ENCODE measurements at regions of chr9 and their contacts with region 1.

Region 1: DNA sequence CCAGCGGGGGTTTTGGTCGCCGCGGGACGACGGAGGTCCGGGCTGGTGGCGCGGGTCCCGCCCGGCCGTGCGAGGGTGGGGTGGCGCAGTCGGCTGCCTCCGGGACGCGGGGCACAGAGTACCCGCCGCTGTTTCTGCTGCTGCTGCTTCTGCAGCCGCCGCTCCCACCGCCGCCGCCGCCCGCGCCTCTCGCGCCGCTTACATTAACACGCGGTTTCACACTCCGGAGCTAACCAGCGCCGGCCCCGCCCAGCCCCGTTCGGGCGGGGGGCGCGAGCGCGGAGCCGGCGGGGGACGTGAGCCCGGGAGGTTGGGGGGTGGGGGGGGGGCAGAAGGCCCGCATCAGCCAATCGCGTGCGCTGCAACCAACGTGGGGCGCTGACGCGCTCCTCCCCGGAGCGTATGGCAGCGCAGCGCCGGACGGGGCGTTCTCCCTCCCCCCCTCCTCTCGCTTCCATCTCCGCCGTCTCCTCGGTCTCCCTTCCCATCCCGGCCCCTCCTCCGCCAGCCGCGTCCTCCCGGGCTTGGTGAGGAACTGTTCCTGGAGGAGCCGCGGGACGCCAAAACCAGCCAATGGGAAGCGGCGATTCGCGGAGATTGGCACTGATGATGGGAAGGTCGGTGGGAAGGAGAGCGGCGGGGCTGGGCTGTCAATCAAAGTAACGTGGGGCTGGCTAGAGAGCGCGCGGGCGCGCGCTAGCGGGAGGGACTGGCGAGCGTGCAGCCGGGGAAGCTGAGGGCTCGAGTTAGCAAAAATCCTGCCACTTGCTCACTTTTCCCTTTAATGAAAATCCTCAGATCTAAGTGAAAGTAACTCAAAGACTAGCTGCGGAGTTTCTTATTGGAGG is at the start of gene TLE1:
- DNase-seq: peak; percentile 97
- ATAC-seq: peak; percentile 79
- H3K4me3 ChIP-seq: peak within 1 kb of the TSS; percentile 76 to 92 (median 78)
- H3K4me3 Mint-ChIP-seq: peak within 1 kb of the TSS; percentile 98
- H3K27ac ChIP-seq: peak within 1 kb of the TSS; percentile 82 to 87
- H3K27ac Mint-ChIP-seq: peak within 1 kb of the TSS; percentile 95
- H3K4me1 ChIP-seq: peaks cover 32 to 35% of the 10 kb centered on the region in 2 donors
- H3K4me1 Mint-ChIP-seq: peaks cover 16% of the 10 kb centered on the region
- H3K27me3 ChIP-seq: peaks cover 0 to 21% (median 4%) of the 10 kb centered on the region in 4 experiments
- H3K27me3 Mint-ChIP-seq: peaks cover 12% of the 10 kb centered on the region
- CTCF ChIP-seq: no peak
- total RNA-seq, gene TLE1: 27.6 and 33.5 TPM in 2 replicates

Region 2: GRCh38 chr9:81521892-81522291 is 167.7 kb before region 1 on chr9:
- CTCF ChIA-PET with region 1: interaction called, 128 read pairs
- POLR2A ChIA-PET with region 1: no interaction called
- intact Hi-C with region 1: loop called (anchors 1 kb)
- DNase-seq: no peak
- ATAC-seq: no peak
- H3K4me3 ChIP-seq: no peak overlapping the region
- H3K4me3 Mint-ChIP-seq: no peak overlapping the region
- H3K27ac ChIP-seq: no peak overlapping the region
- H3K27ac Mint-ChIP-seq: no peak overlapping the region
- H3K4me1 ChIP-seq: peaks cover 0 to 7% of the 10 kb centered on the region in 2 donors
- H3K4me1 Mint-ChIP-seq: peaks cover 8% of the 10 kb centered on the region
- H3K27me3 ChIP-seq: peaks cover 0 to 5% (median 2%) of the 10 kb centered on the region in 4 experiments
- H3K27me3 Mint-ChIP-seq: peaks cover 20% of the 10 kb centered on the region
- CTCF ChIP-seq: no peak

Region 3: GRCh38 chr9:81592887-81593266 is 96.7 kb before region 1 on chr9:
- CTCF ChIA-PET with region 1: interaction called, 7 read pairs
- POLR2A ChIA-PET with region 1: no interaction called
- intact Hi-C with region 1: loop called (anchors 2 kb)
- DNase-seq: peak; percentile 24
- ATAC-seq: peak; percentile 21
- H3K4me3 ChIP-seq: no peak overlapping the region
- H3K4me3 Mint-ChIP-seq: peak overlapping the region; percentile 5
- H3K27ac ChIP-seq: no peak overlapping the region
- H3K27ac Mint-ChIP-seq: peak overlapping the region; percentile 11
- H3K4me1 ChIP-seq: peaks cover 42 to 44% of the 10 kb centered on the region in 2 donors
- H3K4me1 Mint-ChIP-seq: peaks cover 49% of the 10 kb centered on the region
- H3K27me3 ChIP-seq: no peaks in the 10 kb centered on the region
- H3K27me3 Mint-ChIP-seq: no peaks in the 10 kb centered on the region
- CTCF ChIP-seq: no peak

Region 4: DNA sequence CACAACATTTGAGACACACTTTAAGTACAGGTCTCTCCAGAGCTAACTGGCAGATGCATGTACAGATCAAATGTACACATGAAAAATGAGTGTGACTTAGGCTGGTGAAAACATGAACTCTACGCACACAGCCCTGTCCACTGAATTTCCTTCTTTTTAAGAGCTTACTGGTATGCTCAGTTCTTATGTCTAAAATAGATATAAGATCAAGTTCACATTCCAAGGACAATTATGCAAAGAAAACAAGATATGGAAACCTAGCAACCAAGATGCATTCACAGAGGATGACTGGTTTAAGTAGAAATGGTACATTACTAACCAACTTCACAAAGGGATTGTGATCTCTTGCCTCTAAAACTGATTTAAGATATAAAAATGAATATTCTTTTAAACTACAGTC is 57.0 kb before region 1 on chr9:
- CTCF ChIA-PET with region 1: interaction called, 13 read pairs
- POLR2A ChIA-PET with region 1: interaction called, 3 read pairs
- intact Hi-C with region 1: loop called (anchors 10 kb)
- DNase-seq: no peak
- ATAC-seq: no peak
- H3K4me3 ChIP-seq: no peak overlapping the region
- H3K4me3 Mint-ChIP-seq: no peak overlapping the region
- H3K27ac ChIP-seq: no peak overlapping the region
- H3K27ac Mint-ChIP-seq: no peak overlapping the region
- H3K4me1 ChIP-seq: peaks cover 18 to 22% of the 10 kb centered on the region in 2 donors
- H3K4me1 Mint-ChIP-seq: peaks cover 34% of the 10 kb centered on the region
- H3K27me3 ChIP-seq: no peaks in the 10 kb centered on the region
- H3K27me3 Mint-ChIP-seq: no peaks in the 10 kb centered on the region
- CTCF ChIP-seq: no peak

Region 5: DNA sequence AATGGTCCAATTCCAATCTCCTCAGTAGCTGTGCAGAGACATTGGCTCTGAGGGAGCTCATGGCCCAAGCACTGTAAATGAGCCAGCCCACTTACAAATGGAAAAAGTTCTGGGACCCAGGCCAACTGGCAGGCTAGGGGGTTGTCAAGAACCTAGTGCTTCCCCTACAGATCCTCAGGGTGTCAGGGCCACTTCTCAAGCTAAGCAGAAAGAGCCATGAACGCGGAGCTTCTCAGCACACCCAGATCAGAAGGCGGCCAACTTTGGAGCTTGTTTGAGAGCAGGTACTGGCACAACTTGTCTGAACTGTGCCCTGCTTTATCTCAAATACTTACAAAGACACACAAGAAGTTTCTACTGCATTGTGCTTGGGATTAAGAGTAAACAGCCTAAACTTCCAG is 17.7 kb before region 1 on chr9:
- CTCF ChIA-PET with region 1: interaction called, 36 read pairs
- POLR2A ChIA-PET with region 1: interaction called, 3 read pairs
- intact Hi-C with region 1: no loop called
- DNase-seq: no peak
- ATAC-seq: no peak
- H3K4me3 ChIP-seq: no peak overlapping the region
- H3K4me3 Mint-ChIP-seq: no peak overlapping the region
- H3K27ac ChIP-seq: no peak overlapping the region
- H3K27ac Mint-ChIP-seq: no peak overlapping the region
- H3K4me1 ChIP-seq: peaks cover 23 to 24% of the 10 kb centered on the region in 2 donors
- H3K4me1 Mint-ChIP-seq: peaks cover 69% of the 10 kb centered on the region
- H3K27me3 ChIP-seq: no peaks in the 10 kb centered on the region
- H3K27me3 Mint-ChIP-seq: no peaks in the 10 kb centered on the region
- CTCF ChIP-seq: no peak

Region 6: GRCh38 chr9:81861644-81862043 is 172.1 kb after region 1 on chr9:
- CTCF ChIA-PET with region 1: no interaction called
- POLR2A ChIA-PET with region 1: no interaction called
- intact Hi-C with region 1: no loop called
- DNase-seq: no peak
- ATAC-seq: no peak
- H3K4me3 ChIP-seq: no peak overlapping the region
- H3K4me3 Mint-ChIP-seq: no peak overlapping the region
- H3K27ac ChIP-seq: no peak overlapping the region
- H3K27ac Mint-ChIP-seq: no peak overlapping the region
- H3K4me1 ChIP-seq: no peaks in the 10 kb centered on the region
- H3K4me1 Mint-ChIP-seq: no peaks in the 10 kb centered on the region
- H3K27me3 ChIP-seq: no peaks in the 10 kb centered on the region
- H3K27me3 Mint-ChIP-seq: peaks cover 3% of the 10 kb centered on the region
- CTCF ChIP-seq: no peak

Region 7: GRCh38 chr9:82128011-82128696 is 438.6 kb after region 1 on chr9:
- CTCF ChIA-PET with region 1: no interaction called
- POLR2A ChIA-PET with region 1: no interaction called
- intact Hi-C with region 1: loop called (anchors 5 kb)
- DNase-seq: peak; percentile 81
- ATAC-seq: peak; percentile 85
- H3K4me3 ChIP-seq: peak overlapping the region in 1 of 5 experiments; percentile 51
- H3K4me3 Mint-ChIP-seq: peak overlapping the region; percentile 70
- H3K27ac ChIP-seq: peak overlapping the region; percentile 84 to 92
- H3K27ac Mint-ChIP-seq: peak overlapping the region; percentile 91
- H3K4me1 ChIP-seq: peaks cover 61 to 63% of the 10 kb centered on the region in 2 donors
- H3K4me1 Mint-ChIP-seq: peaks cover 66% of the 10 kb centered on the region
- H3K27me3 ChIP-seq: no peaks in the 10 kb centered on the region
- H3K27me3 Mint-ChIP-seq: no peaks in the 10 kb centered on the region
- CTCF ChIP-seq: no peak